Sciatic nerve (tissue), 2 donors: ENCODE measurements at regions of chr19 and their contacts with region 1.

Region 1: GRCh38 chr19:52904052-52904451 is 6.6 kb upstream of the ZNF320 start:
- DNase-seq: no peak
- ATAC-seq: no peak

Region 2: GRCh38 chr19:52880895-52881389 is 23.1 kb before region 1 on chr19:
- intact Hi-C with region 1: loop called (anchors 1 kb)
- DNase-seq: no peak
- ATAC-seq: no peak

Region 3: DNA sequence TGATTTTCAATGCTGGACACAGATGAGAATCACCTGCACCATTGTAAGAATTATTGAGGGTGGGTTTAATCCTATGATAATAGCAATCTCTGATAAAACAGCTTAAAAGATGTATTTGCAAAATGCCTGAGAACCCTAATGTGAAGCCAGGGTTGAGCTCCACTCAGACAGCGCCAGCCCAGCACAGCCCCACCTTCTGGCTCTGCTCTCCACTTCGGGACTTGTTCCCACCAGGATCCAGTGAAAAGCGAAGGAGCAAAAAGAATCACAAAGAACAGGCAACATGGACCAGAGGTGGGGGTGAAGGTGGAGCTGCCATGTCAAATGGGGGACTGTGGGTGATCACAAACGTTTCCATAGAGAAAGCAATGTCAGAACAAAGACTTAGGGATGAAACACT is 77.3 kb after region 1 on chr19:
- intact Hi-C with region 1: no loop called
- DNase-seq: no peak
- ATAC-seq: no peak

Region 4: GRCh38 chr19:52993323-52994178 is 89.5 kb after region 1 on chr19:
- intact Hi-C with region 1: no loop called
- DNase-seq: peak; percentile 80
- ATAC-seq: peak; percentile 96